AG04449 (cell line): ENCODE measurements at regions of chr3 and their contacts with region 1.

Region 1: DNA sequence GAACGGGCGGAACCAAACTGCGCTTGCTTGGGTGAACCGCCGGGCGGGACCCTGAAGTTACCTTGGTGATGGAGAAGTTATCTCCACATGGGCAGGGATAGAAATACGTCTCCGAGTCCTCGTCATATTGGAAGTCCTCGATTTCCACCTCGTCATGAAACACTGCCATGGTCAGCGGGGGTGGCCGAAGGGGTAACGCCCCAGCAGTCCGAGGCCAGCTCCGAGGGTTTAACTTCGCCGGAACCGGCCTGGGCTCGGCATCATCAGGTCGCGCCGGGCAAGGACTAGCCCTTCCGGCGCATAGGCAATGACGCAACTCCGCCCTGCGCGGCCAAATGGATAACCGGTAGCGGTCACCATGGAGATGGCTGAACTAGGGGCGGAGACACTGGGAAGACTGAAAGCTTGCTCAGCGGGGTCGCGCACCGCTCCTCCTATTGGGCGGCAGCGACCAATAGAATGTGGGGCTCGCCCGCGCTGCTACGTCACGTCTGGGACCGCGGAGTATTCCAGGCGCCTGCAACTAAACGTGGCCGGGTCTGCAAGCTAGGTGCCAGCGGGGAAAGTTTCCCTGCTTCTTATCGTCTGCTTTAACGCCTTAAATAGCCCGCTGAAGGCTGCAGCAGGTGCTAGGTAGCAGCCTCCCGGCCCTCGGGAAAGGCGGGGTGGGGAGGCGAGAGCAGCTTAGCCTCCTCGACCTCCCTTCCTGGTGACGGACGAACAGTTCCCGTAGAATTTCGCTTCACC is at the starts of genes DPH3 and OXNAD1:
- DNase-seq: peak; percentile 97
- H3K4me3 ChIP-seq: peak within 1 kb of the TSS; percentile 98
- CTCF ChIP-seq: no peak

Region 2: GRCh38 chr3:16130066-16130465 is 134.8 kb before region 1 on chr3:
- CTCF ChIA-PET with region 1: no interaction called
- POLR2A ChIA-PET with region 1: no interaction called
- DNase-seq: peak; percentile 94
- H3K4me3 ChIP-seq: no peak overlapping the region
- CTCF ChIP-seq: no peak

Region 3: DNA sequence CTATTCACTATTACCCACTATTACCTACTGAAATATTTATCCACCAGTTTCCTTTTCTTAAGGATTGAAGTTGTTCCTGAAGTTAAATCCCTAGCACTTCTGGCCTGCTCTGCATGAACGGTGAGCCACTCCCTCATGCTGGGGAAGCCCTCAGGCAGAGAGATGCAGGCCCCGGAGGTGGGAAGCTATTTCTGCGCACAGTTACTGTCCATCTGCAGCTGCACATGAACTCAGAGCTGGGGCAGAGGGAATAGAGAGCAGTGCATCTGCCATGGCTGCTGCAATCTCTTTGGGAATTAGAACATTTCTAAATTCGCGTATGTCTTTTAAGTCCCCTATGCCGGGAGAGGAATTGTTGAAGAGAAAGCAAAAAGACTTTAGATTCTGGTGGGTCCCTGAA is 96.7 kb before region 1 on chr3:
- CTCF ChIA-PET with region 1: no interaction called
- POLR2A ChIA-PET with region 1: no interaction called
- DNase-seq: no peak
- H3K4me3 ChIP-seq: no peak overlapping the region
- CTCF ChIP-seq: no peak

Region 4: DNA sequence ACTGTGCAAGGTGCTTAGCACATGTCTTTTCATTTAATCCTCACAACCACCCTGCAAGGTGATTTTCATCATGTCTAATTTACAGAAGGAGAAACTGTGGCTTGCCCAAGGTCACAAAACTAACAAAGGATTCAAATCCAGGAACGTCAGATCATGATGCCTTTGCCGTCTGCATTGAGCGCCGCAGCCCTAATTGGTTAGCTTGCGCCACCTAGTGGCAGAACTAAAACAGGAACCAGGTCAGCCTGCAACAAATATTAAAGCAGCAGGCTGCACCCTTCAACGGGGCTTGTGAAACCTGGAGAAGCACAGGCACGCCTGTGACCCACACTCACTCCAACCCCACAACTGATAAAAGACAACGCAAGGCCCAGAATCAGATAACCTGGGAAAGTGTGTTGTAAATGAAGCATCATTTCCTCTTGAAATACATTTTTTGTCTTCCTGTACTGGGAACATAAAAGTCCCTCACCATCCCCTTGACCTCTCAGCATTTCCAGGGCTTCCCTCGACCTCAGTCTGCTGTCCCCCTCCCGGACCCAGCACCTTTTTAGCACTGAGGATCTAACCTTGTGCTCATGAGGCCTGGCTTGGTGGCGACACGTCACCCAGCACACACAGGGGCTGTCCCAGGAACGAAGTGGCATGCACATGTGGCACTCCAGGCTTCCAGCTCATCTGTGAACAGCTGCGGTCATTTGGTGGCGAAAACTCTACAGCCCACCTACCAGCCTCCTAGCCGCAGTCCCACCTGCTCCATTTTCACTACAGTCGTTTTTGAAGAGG is 17.4 kb before region 1 on chr3:
- CTCF ChIA-PET with region 1: interaction called, 12 read pairs
- POLR2A ChIA-PET with region 1: interaction called, 5 read pairs
- DNase-seq: peak; percentile 31
- H3K4me3 ChIP-seq: no peak overlapping the region
- CTCF ChIP-seq: peak; percentile 82

Region 5: DNA sequence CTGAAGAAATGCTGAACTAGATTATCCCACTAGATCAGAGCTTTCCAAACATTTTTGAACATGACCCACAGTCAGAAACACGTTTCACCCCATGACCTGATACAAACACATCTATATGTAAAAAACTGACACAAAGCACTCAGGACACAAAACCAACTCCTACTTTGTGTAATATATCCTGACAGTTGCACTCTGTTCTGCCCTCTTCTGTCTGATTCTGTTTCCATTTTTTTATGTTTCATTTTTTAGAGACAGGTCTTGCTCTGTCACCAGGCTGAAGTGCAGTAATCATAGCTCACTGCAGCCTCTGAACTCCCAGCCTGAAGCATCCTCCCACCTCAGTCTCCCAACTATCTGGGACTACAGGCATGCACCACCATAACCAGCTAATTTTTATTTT is 264.4 kb after region 1 on chr3:
- CTCF ChIA-PET with region 1: interaction called, 10 read pairs
- POLR2A ChIA-PET with region 1: no interaction called
- DNase-seq: no peak
- H3K4me3 ChIP-seq: no peak overlapping the region
- CTCF ChIP-seq: no peak

Region 6: GRCh38 chr3:16550676-16551341 is 285.9 kb after region 1 on chr3:
- CTCF ChIA-PET with region 1: interaction called, 135 read pairs
- POLR2A ChIA-PET with region 1: no interaction called
- DNase-seq: peak; percentile 57
- H3K4me3 ChIP-seq: no peak overlapping the region; the same call in 1 of the 2 replicates
- CTCF ChIP-seq: peak; percentile 84